ENCODE measurements at regions of chr15 and their contacts with region 1.

Region 1: DNA sequence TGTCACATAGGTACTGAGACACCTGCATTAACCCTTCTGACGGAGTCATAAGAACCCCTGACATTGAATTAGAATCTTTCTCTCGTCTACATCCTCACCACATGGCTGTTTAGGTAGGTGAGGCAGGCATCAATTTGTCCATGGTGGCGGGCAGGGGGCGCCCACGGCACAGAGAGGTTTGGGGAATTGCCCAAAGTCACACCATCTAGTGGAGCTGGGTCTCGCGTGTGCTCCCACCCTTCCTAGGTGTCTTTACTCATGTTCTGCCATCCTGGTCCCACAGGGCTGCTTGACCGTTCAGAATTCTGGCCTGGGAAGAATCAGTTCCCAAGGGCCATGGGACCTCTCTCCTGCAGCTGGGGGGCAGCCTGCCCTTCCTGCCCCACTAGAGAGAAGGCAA is 14.7 kb upstream of the DLL4 start:
- DNase-seq: no peak
- ATAC-seq: peak; percentile 73
- H3K4me3 ChIP-seq: no peak overlapping the region
- H3K27ac ChIP-seq: no peak overlapping the region
- H3K4me1 ChIP-seq: peaks cover 9% of the 10 kb centered on the region
- H3K27me3 ChIP-seq: no peaks in the 10 kb centered on the region; a peak in 1 of 4 replicates
- CTCF ChIP-seq: peak; percentile 39 to 53 (median 49); a peak in 4 of 6 replicates
- EP300 ChIP-seq: no peak
- POLR2A ChIP-seq: no peak
- RAD21 ChIP-seq: peak; percentile 24; the same call in 1 of the 2 replicates

Region 2: DNA sequence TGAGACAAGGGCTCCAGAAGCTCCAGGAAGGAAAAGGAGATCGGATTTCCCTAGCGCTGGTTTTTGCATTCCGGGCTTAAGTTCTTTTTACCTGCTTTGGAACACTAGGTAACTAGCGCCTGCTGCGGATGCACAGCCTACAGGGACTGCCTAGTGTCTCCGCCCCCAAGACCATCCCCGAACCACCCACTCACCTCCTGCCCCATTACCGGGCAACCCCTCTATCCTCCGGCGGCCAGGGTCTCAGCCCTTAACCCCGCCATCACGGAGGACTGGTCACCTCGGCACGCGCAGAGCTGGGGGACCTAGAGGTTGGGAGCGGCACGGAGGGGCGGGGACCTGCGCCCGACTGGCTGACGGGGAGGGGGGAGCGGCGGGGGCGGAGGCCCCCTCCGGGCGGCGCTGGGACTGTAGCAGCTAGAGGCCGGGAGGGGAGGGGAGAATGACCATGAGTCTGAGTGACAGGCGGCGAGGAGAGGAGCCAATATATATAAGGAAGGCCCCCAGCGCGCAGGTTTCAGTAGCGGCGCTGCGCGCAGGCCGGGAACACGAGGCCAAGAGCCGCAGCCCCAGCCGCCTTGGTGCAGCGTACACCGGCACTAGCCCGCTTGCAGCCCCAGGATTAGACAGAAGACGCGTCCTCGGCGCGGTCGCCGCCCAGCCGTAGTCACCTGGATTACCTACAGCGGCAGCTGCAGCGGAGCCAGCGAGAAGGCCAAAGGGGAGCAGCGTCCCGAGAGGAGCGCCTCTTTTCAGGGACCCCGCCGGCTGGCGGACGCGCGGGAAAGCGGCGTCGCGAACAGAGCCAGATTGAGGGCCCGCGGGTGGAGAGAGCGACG is 14.6 kb after region 1 on chr15 and contains the start of gene DLL4:
- CTCF ChIA-PET with region 1: interaction called, 19 read pairs
- POLR2A ChIA-PET with region 1: interaction called, 3 read pairs
- RAD21 ChIA-PET with region 1: interaction called, 4 read pairs
- SMC1A ChIA-PET with region 1: interaction called, 3 read pairs
- in situ Hi-C with region 1: no loop called
- intact Hi-C with region 1: no loop called
- DNase-seq: no peak
- ATAC-seq: peak; percentile 54
- H3K4me3 ChIP-seq: peak within 1 kb of the TSS; percentile 64
- H3K27ac ChIP-seq: no peak within 1 kb of the TSS
- H3K4me1 ChIP-seq: peaks cover 33% of the 10 kb centered on the region
- H3K27me3 ChIP-seq: peaks cover 22 to 31% of the 10 kb centered on the region in 2 experiments
- CTCF ChIP-seq: no peak
- EP300 ChIP-seq: no peak
- POLR2A ChIP-seq: peak; percentile 78
- RAD21 ChIP-seq: no peak
- polyA plus RNA-seq, gene DLL4: not detected

Measured in GM12878 (cell line).